ENCODE measurements at regions of chr9 and their contacts with region 1.

Region 1: GRCh38 chr9:35814841-35815543 is at the start of gene HINT2:
- DNase-seq: peak; percentile 99
- H3K4me3 Mint-ChIP-seq: peak within 1 kb of the TSS; percentile 90
- H3K27ac Mint-ChIP-seq: peak within 1 kb of the TSS; percentile 98
- H3K4me1 Mint-ChIP-seq: peaks cover 35% of the 10 kb centered on the region
- H3K27me3 Mint-ChIP-seq: peaks cover 4% of the 10 kb centered on the region
- total RNA-seq, gene HINT2: 42.3 and 42.5 TPM in 2 replicates

Region 2: DNA sequence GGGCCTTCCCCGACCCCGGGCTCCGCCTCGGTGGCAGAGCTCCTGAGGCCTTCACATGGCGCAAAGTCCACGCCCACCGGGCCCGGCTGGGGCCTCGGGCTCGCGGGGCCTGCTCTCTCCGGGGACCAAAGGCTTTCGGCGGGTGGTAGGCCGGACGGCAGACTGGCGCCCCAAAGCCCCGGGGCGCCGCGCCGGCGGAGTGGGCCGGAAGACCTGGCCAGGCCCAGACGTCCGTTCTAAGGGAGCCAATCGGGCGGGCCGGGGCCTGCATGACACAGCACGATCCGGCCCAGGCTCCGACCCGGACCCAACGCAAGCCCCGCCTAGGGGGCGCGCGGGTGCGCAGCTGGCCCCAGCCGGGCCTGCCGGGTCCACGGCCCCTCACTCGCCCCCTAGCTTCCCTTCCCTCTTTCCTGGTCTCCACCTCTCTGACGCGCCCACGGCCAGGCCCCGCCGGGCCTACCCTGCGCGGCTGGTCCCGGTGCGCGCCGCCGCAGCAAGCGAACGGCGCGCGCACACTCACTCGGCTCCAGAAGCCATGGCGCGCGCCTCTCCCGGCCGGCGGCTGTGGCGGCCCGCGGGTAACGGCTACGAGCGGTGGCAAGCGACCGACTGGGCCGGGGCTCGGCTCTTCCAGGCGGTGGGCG is 743.1 kb before region 1 on chr9:
- intact Hi-C with region 1: loop called (anchors 1 kb)
- DNase-seq: peak; percentile 93
- H3K4me3 Mint-ChIP-seq: peak overlapping the region; percentile 95
- H3K27ac Mint-ChIP-seq: peak overlapping the region; percentile 94
- H3K4me1 Mint-ChIP-seq: peaks cover 46% of the 10 kb centered on the region
- H3K27me3 Mint-ChIP-seq: no peaks in the 10 kb centered on the region

Region 3: GRCh38 chr9:35603987-35604577 is 210.9 kb before region 1 on chr9:
- intact Hi-C with region 1: loop called (anchors 1 kb)
- DNase-seq: peak; percentile 100
- H3K4me3 Mint-ChIP-seq: peak overlapping the region; percentile 90
- H3K27ac Mint-ChIP-seq: peak overlapping the region; percentile 96
- H3K4me1 Mint-ChIP-seq: peaks cover 22% of the 10 kb centered on the region
- H3K27me3 Mint-ChIP-seq: no peaks in the 10 kb centered on the region

Region 4: GRCh38 chr9:35732122-35732799 is 82.7 kb before region 1 on chr9 and contains the starts of genes CREB3 and TLN1:
- intact Hi-C with region 1: loop called (anchors 1 kb)
- DNase-seq: peak; percentile 99
- H3K4me3 Mint-ChIP-seq: no peak within 1 kb of the TSS
- H3K27ac Mint-ChIP-seq: peak within 1 kb of the TSS; percentile 92
- H3K4me1 Mint-ChIP-seq: peaks cover 22% of the 10 kb centered on the region
- H3K27me3 Mint-ChIP-seq: no peaks in the 10 kb centered on the region
- total RNA-seq, gene CREB3: 27.0 and 27.6 TPM in 2 replicates
- total RNA-seq, gene TLN1: 220 and 243 TPM in 2 replicates

Region 5: DNA sequence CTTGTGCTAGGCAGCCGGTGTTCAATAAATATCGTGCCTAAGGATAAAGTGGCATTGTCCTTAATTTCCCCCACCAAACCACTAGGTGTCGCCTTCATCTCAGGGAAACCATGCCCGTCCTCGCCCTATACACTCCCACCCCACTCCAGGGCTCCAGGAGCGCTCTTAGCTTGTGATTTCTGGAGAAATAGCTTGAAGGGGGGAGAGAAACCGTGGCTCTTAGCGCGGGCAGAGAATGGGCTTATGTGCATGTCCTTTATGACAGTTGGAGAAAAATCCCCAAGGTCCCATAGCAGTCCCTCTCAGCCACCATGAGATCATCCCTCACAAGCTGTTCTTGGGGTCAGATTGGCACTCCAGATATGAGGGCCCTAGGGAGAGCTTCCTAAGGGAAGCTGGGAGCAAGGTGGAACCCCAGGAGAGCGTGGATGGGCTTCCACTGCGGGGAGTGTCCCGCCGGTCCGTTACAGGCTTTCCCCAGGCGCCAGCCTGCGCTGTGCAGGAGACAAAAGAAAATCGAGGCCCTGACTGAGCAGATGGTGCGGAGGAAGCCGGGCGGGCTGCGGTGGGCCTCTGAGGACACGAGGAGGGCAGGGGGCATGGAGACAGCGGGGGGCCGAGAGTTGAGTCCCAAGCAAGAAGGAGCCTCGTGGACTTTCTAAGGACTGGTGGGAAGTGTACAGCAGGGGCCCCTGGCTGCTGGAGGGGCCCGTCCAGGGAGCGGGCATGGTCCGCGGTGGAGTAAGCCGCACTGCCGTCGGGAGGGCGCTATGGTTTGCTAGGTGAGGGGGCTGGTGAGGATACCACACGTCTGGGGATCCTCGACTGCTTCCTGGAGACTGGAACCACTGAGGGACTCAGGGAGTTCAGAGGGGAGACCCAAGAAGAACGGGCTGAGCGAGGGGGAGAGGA is 24.4 kb before region 1 on chr9:
- intact Hi-C with region 1: loop called (anchors 2 kb)
- DNase-seq: peak; percentile 87
- H3K4me3 Mint-ChIP-seq: no peak overlapping the region
- H3K27ac Mint-ChIP-seq: no peak overlapping the region
- H3K4me1 Mint-ChIP-seq: peaks cover 17% of the 10 kb centered on the region
- H3K27me3 Mint-ChIP-seq: no peaks in the 10 kb centered on the region

Region 6: DNA sequence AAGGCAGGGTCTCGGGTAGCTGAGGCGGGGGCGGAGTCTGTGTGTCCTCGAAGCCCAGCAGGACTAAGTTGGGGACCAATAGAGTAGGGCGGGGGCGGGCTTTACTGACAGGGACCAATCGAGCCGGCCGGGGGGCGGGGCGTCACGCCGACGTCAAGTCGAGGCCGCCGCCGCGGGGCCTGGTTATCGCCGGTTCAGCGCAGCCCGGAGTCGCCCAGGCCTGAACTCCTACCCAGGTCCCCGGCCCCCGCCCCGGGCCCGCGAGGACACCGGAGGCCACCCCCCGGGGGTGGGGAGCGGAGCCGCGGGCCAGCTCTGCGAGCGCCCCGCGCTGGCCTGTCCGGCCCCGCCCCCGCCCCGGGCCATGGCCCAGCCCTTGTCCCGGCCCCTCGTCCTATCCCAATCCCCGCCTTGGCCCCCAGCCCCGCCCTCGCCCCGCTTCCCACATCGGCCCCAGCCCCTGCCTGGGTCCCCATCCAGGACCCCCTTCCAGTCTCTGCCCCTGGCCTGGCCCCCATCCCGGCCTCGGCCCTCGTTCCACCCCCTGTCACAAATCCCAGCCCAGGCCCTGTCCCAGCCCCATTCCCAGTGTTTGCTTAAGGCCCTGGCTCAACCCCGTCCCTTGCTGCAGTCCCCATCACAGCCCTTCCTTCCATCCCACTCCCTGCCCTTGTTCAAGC is 14.2 kb after region 1 on chr9 and contains the start of gene TMEM8B:
- intact Hi-C with region 1: loop called (anchors 1 kb)
- DNase-seq: peak; percentile 97
- H3K4me3 Mint-ChIP-seq: peak within 1 kb of the TSS; percentile 93
- H3K27ac Mint-ChIP-seq: peak within 1 kb of the TSS; percentile 86
- H3K4me1 Mint-ChIP-seq: peaks cover 29% of the 10 kb centered on the region
- H3K27me3 Mint-ChIP-seq: peaks cover 6% of the 10 kb centered on the region
- total RNA-seq, gene TMEM8B: 2.0 and 2.3 TPM in 2 replicates

Region 7: DNA sequence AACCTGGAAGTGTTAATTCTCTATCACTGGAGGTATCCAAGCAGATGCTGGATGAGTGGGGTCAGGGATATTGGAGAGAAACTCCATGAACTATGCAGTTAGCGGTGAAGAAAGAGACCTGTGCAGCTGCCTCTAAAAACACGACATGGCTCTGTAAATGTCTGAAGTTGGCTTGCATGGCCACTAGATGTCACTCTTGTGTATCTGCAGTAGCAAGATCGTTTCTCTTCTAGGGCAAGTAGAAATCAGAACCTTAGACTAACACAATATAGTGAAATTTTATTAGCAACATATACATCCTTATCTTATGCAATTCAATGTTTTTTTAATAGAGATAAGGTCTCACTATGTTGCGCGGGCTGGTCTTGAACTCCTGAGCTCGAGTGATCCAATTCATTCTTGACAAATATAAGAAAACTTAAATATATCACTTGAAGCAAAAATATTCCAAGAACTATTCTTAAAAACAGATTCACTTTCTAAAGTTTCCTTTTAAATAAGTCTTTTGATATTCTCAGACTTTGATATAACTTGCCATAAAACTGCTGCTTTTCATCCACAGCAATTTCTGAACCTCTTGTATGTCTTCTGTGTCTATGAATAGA is 140.1 kb after region 1 on chr9:
- intact Hi-C with region 1: no loop called
- DNase-seq: peak; percentile 84
- H3K4me3 Mint-ChIP-seq: no peak overlapping the region
- H3K27ac Mint-ChIP-seq: no peak overlapping the region
- H3K4me1 Mint-ChIP-seq: no peaks in the 10 kb centered on the region
- H3K27me3 Mint-ChIP-seq: peaks cover 21% of the 10 kb centered on the region

Region 8: GRCh38 chr9:36487482-36488388 is 672.7 kb after region 1 on chr9:
- intact Hi-C with region 1: loop called (anchors 5 kb)
- DNase-seq: peak; percentile 97
- H3K4me3 Mint-ChIP-seq: peak overlapping the region; percentile 89
- H3K27ac Mint-ChIP-seq: peak overlapping the region; percentile 98
- H3K4me1 Mint-ChIP-seq: peaks cover 44% of the 10 kb centered on the region
- H3K27me3 Mint-ChIP-seq: no peaks in the 10 kb centered on the region

Measured in activated CD4-positive, alpha-beta T cell treated with anti-CD3 and anti-CD28 coated beads, Interleukin-2, amount 10 ng/mL, durations not matched to agents 24 days and 14 days (primary cell).